Caco-2 (cell line): ENCODE measurements at regions of chr19 and their contacts with region 1.

Region 1: GRCh38 chr19:49097455-49098288 is 12.4 kb downstream of the SNRNP70 start:
- DNase-seq: peak; percentile 83 to 88
- H3K4me3 ChIP-seq: no peak overlapping the region
- H3K4me3 Mint-ChIP-seq: no peak overlapping the region
- H3K27ac Mint-ChIP-seq: no peak overlapping the region
- H3K4me1 ChIP-seq: no peaks in the 10 kb centered on the region; the same call in 1 of the 2 replicates
- H3K4me1 Mint-ChIP-seq: peaks cover 15% of the 10 kb centered on the region
- H3K27me3 ChIP-seq: no peaks in the 10 kb centered on the region
- H3K27me3 Mint-ChIP-seq: no peaks in the 10 kb centered on the region
- CTCF ChIP-seq: peak; percentile 98 to 99

Region 2: GRCh38 chr19:49064768-49065611 is 32.7 kb before region 1 on chr19 and contains the start of gene NTF4:
- CTCF ChIA-PET with region 1: interaction called, 16 read pairs
- POLR2A ChIA-PET with region 1: interaction called, 3 read pairs
- intact Hi-C with region 1: no loop called
- DNase-seq: peak; percentile 92
- H3K4me3 ChIP-seq: peak within 1 kb of the TSS; percentile 38
- H3K4me3 Mint-ChIP-seq: peak within 1 kb of the TSS; percentile 71
- H3K27ac Mint-ChIP-seq: peak within 1 kb of the TSS; percentile 73
- H3K4me1 ChIP-seq: peaks cover 34% of the 10 kb centered on the region
- H3K4me1 Mint-ChIP-seq: peaks cover 26% of the 10 kb centered on the region
- H3K27me3 ChIP-seq: no peaks in the 10 kb centered on the region
- H3K27me3 Mint-ChIP-seq: no peaks in the 10 kb centered on the region
- CTCF ChIP-seq: peak in 1 of 2 experiments; percentile 29
- total RNA-seq, gene NTF4: 9.1 and 10.2 TPM in 2 replicates

Region 3: DNA sequence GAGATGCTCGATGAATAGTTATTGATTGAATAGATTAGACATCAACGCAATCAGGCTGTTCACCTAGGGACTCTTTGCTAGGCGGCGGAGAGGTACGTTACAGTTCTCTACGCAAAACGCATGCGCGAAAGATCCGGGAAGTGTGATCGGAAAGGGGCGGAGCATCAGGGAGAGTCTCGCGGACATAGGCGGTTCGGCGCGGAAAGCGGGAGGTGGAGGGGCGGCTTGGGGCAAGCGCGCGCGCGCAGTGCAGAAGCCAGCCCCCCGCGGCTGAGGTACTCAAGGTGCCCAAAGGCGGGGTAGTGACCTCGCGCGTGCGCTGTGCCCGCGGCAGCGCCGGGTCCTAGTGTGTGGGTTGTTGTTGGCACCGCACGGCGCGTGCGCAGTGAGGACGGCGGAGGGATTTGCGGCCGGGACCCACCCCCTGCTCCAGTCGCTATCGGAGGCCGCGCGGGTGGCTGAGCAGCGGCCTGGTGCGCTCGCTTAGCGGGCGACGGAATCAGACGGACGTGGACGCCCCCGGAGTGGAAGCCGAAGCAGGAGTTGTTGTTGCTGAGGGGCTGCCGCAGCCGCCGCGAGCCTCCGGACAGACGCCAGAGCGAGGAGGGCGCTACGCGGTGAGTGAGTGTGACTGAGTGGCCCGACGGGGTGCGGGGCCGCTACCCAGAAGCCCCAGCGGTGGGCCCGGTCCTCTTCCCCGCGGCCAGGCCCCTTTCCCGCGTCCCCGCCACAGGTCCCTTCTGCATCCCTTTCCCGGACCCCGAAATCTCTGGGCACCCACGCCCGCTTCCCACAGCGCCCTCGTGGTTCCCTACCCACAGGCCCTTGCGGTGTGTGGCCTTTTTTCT is 12.4 kb before region 1 on chr19 and contains the start of gene SNRNP70:
- CTCF ChIA-PET with region 1: interaction called, 6 read pairs
- POLR2A ChIA-PET with region 1: no interaction called
- intact Hi-C with region 1: loop called (anchors 1 kb)
- DNase-seq: peak; percentile 100
- H3K4me3 ChIP-seq: peak within 1 kb of the TSS; percentile 71
- H3K4me3 Mint-ChIP-seq: peak within 1 kb of the TSS; percentile 92
- H3K27ac Mint-ChIP-seq: peak within 1 kb of the TSS; percentile 78
- H3K4me1 ChIP-seq: 0 out of 2 replicates have a peak, but pooled peaks cover 7% of the 10 kb centered on the region
- H3K4me1 Mint-ChIP-seq: peaks cover 17% of the 10 kb centered on the region
- H3K27me3 ChIP-seq: no peaks in the 10 kb centered on the region
- H3K27me3 Mint-ChIP-seq: no peaks in the 10 kb centered on the region
- CTCF ChIP-seq: no peak
- total RNA-seq, gene SNRNP70: 251 and 259 TPM in 2 replicates

Region 4: DNA sequence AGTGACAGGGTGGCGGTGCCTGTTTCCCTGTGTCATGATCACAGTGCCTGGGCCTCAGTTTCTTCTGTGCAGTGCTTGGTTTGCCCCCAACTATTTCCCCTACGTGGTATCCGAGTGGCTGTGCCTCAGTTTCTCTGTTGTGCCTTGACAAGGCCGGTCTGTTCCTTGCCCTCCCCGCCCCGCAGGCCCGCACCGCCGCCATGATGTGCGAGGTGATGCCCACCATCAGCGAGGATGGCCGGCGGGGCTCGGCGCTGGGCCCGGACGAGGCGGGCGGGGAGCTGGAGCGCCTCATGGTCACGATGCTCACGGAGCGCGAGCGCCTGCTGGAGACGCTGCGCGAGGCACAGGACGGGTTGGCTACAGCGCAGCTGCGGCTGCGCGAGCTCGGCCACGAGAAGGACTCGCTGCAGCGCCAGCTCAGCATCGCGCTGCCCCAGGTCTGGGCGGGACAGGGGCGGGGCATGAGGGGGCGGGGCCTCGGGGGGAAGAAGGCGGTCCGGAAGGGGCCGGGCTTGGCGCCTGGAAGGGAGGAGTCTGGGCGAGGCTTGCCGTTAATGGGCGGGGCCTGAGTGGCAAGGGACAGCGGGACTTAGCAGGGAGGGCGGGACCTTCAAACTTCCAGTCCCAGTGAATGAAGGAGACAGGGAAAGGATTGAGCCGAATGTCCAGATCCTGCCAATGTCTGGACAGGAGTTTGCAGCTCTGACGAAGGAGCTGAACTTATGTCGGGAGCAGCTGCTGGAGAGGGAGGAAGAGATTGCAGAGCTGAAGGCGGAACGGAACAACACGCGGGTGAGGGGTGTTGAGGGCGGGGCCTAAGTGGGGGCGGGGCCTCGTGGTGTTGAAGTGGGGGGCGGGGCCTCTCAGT is 30.2 kb after region 1 on chr19:
- CTCF ChIA-PET with region 1: interaction called, 51 read pairs
- POLR2A ChIA-PET with region 1: interaction called, 3 read pairs
- intact Hi-C with region 1: no loop called
- DNase-seq: peak; percentile 98
- H3K4me3 ChIP-seq: peak overlapping the region; percentile 46
- H3K4me3 Mint-ChIP-seq: peak overlapping the region; percentile 85
- H3K27ac Mint-ChIP-seq: peak overlapping the region; percentile 80
- H3K4me1 ChIP-seq: peaks cover 17% of the 10 kb centered on the region; the same call in 1 of the 2 replicates
- H3K4me1 Mint-ChIP-seq: peaks cover 26% of the 10 kb centered on the region
- H3K27me3 ChIP-seq: no peaks in the 10 kb centered on the region
- H3K27me3 Mint-ChIP-seq: no peaks in the 10 kb centered on the region
- CTCF ChIP-seq: peak in 1 of 2 experiments; percentile 16

Region 5: GRCh38 chr19:49200238-49200862 is 102.7 kb after region 1 on chr19:
- CTCF ChIA-PET with region 1: interaction called, 96 read pairs
- POLR2A ChIA-PET with region 1: interaction called, 5 read pairs
- intact Hi-C with region 1: loop called (anchors 1 kb)
- DNase-seq: peak; percentile 31 to 55
- H3K4me3 ChIP-seq: no peak overlapping the region
- H3K4me3 Mint-ChIP-seq: no peak overlapping the region
- H3K27ac Mint-ChIP-seq: peak overlapping the region; percentile 20
- H3K4me1 ChIP-seq: no peaks in the 10 kb centered on the region
- H3K4me1 Mint-ChIP-seq: no peaks in the 10 kb centered on the region
- H3K27me3 ChIP-seq: no peaks in the 10 kb centered on the region
- H3K27me3 Mint-ChIP-seq: no peaks in the 10 kb centered on the region
- CTCF ChIP-seq: no peak

Region 6: DNA sequence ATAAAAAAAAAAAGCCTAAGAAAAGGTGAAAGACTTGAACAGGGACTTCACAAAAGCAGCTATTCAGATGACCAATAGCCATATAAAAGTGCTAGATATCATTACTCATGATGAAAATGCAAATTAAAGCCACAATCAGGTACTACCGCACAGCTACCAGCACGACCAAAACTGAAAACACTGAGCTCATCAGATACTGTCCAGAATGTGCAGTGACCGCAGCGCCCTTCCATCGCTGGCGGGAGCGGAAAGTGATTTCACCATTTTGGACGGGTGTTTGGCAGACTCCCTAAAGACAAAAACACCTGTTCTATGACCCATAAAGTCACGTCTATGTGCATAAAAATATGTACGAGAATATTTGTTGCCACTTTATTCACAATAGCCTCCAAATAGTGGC is 166.6 kb after region 1 on chr19:
- CTCF ChIA-PET with region 1: no interaction called
- POLR2A ChIA-PET with region 1: no interaction called
- intact Hi-C with region 1: no loop called
- DNase-seq: no peak
- H3K4me3 ChIP-seq: no peak overlapping the region
- H3K4me3 Mint-ChIP-seq: no peak overlapping the region
- H3K27ac Mint-ChIP-seq: no peak overlapping the region
- H3K4me1 ChIP-seq: peaks cover 5% of the 10 kb centered on the region; the same call in 1 of the 2 replicates
- H3K4me1 Mint-ChIP-seq: peaks cover 4% of the 10 kb centered on the region
- H3K27me3 ChIP-seq: no peaks in the 10 kb centered on the region
- H3K27me3 Mint-ChIP-seq: no peaks in the 10 kb centered on the region
- CTCF ChIP-seq: no peak